CD4-positive, alpha-beta T cell (primary cell): ENCODE measurements at regions of chr7 and their contacts with region 1.

Region 1: GRCh38 chr7:74083117-74083876 is at the start of gene LIMK1:
- DNase-seq: peak; percentile 63 to 94 (median 82)
- ATAC-seq: peak; percentile 95
- H3K4me3 ChIP-seq: peak within 1 kb of the TSS; percentile 67
- H3K4me3 Mint-ChIP-seq: peak within 1 kb of the TSS; percentile 88
- H3K27ac ChIP-seq: no peak within 1 kb of the TSS
- H3K27ac Mint-ChIP-seq: peak within 1 kb of the TSS; percentile 62
- H3K4me1 ChIP-seq: peaks cover 20% of the 10 kb centered on the region
- H3K4me1 Mint-ChIP-seq: peaks cover 9% of the 10 kb centered on the region
- H3K27me3 ChIP-seq: no peaks in the 10 kb centered on the region
- H3K27me3 Mint-ChIP-seq: no peaks in the 10 kb centered on the region
- CTCF ChIP-seq: no peak
- total RNA-seq, gene LIMK1: 7.8 to 8.2 TPM

Region 2: GRCh38 chr7:74094224-74095101 is 11.2 kb after region 1 on chr7:
- CTCF ChIA-PET with region 1: no interaction called
- POLR2A ChIA-PET with region 1: interaction called, 17 read pairs
- intact Hi-C with region 1: no loop called
- DNase-seq: peak; percentile 30 to 87 (median 65)
- ATAC-seq: peak; percentile 75
- H3K4me3 ChIP-seq: peak overlapping the region; percentile 60
- H3K4me3 Mint-ChIP-seq: peak overlapping the region; percentile 92
- H3K27ac ChIP-seq: peak overlapping the region; percentile 54 to 70
- H3K27ac Mint-ChIP-seq: peak overlapping the region; percentile 91
- H3K4me1 ChIP-seq: peaks cover 27% of the 10 kb centered on the region
- H3K4me1 Mint-ChIP-seq: peaks cover 15% of the 10 kb centered on the region
- H3K27me3 ChIP-seq: no peaks in the 10 kb centered on the region
- H3K27me3 Mint-ChIP-seq: no peaks in the 10 kb centered on the region
- CTCF ChIP-seq: no peak

Region 3: GRCh38 chr7:74254129-74254857 is 171.0 kb after region 1 on chr7 and contains the start of gene RFC2:
- CTCF ChIA-PET with region 1: no interaction called
- POLR2A ChIA-PET with region 1: no interaction called
- intact Hi-C with region 1: loop called in 1 of 2 experiments (anchors 5 kb)
- DNase-seq: peak; percentile 91 to 99 (median 96)
- ATAC-seq: peak; percentile 96
- H3K4me3 ChIP-seq: peak within 1 kb of the TSS; percentile 92
- H3K4me3 Mint-ChIP-seq: peak within 1 kb of the TSS; percentile 92
- H3K27ac ChIP-seq: peak within 1 kb of the TSS; percentile 83
- H3K27ac Mint-ChIP-seq: peak within 1 kb of the TSS; percentile 93
- H3K4me1 ChIP-seq: peaks cover 31% of the 10 kb centered on the region
- H3K4me1 Mint-ChIP-seq: peaks cover 26% of the 10 kb centered on the region
- H3K27me3 ChIP-seq: no peaks in the 10 kb centered on the region
- H3K27me3 Mint-ChIP-seq: no peaks in the 10 kb centered on the region
- CTCF ChIP-seq: peak; percentile 33
- total RNA-seq, gene RFC2: 8.5 to 9.6 TPM